ENCODE measurements at regions of chr20 and their contacts with region 1.

Region 1: DNA sequence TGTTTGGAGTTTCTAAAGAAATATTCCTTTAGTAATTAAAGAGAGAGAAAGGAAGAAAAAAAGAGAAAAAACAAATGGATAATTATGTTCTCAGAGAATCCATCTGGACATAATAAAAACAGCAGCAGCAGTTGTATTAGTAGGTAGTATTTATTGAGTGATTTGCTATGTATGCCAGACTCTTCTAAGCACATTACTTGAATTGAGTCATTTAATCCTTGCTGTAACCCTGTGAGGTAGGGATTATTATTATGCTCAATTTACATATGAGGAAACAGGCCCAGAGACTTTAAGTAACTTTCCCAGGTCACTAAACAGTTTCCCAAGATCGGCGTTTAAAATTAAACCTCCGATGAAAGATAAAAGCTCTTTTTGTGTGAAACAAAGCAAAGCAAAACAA is 238.8 kb downstream of the TSHZ2 start:
- DNase-seq: no peak
- H3K4me3 ChIP-seq: no peak overlapping the region
- CTCF ChIP-seq: no peak
- POLR2A ChIP-seq: no peak

Region 2: DNA sequence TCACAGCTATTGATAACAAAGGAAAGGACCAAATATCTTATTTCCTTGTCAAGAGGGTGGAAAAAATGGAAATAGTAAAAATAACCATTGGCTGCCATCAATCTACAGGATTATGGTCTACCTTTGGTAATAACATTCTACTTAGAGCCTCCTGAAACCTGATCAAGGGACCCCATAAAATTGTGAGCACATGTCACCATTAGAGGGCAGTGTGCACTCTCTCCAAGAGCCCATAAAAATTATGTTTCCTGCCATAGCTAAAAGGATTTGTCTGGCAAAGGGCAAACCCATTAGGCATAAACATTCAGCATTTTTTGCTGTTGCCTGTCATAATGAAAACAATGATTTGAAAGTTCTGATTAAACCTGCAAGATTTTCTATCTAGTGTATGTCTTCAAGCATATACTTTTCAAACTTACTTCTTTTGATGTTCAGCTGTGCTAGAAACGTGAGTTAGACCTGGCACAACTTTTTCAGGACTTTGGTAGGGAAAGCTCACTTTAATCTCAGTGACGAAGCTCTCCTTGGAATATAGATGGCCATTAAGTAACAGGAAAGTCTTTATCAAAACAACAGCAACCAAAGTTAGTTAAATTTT is 898.7 kb before region 1 on chr20:
- intact Hi-C with region 1: loop called (anchors 5 kb)
- DNase-seq: peak in 1 of 2 donors; percentile 33
- H3K4me3 ChIP-seq: no peak overlapping the region
- CTCF ChIP-seq: no peak
- POLR2A ChIP-seq: no peak

Region 3: GRCh38 chr20:53021934-53022333 is 189.0 kb before region 1 on chr20:
- intact Hi-C with region 1: no loop called
- DNase-seq: no peak
- H3K4me3 ChIP-seq: no peak overlapping the region
- CTCF ChIP-seq: no peak
- POLR2A ChIP-seq: no peak

Region 4: DNA sequence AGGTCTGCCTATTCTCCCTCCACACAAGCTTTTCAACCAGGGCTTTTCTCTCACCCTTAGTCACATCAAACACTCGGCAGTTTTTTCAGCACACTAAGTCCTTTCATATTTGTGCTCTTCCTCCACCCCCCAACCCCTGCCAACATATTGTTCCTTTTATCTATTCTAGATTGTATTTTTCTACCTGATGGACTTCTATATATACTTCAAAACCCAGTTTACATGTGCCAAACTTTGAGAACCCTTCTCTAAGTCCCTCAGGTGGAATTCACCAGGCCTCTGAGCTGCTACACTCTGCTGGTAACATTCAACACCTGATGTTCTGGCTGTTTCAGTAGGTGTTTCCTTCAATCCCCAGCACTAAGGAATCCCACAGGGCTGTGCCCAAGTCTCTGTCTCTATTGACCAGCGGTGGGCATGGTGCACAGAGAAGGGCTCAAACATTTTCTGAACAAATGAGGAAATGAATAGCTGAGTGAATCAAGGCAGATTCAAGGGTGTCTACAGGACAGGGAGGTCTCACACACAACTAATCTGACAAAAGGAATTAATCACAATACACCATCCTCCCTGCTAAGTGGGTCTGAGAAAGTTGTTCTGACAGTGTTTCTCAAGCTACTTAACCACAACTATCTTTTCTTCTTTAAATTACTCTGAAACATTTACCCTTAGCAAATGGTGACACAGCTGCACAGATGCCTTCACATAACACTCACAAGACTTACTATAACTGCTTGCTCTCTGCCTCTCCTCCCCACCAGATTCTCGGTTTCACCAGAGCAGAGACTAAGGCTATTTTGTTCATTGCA is 72.3 kb before region 1 on chr20:
- intact Hi-C with region 1: no loop called
- DNase-seq: no peak
- H3K4me3 ChIP-seq: no peak overlapping the region
- CTCF ChIP-seq: no peak
- POLR2A ChIP-seq: no peak

Region 5: GRCh38 chr20:53592992-53593465 is 382.1 kb after region 1 on chr20:
- intact Hi-C with region 1: no loop called
- DNase-seq: peak in 1 of 2 donors; percentile 89
- H3K4me3 ChIP-seq: peak overlapping the region; percentile 96
- CTCF ChIP-seq: no peak
- POLR2A ChIP-seq: no peak

Measured in lower leg skin (tissue), 4 donors.